CD4-positive, alpha-beta memory T cell (primary cell): ENCODE measurements at regions of chr5 and their contacts with region 1.

Region 1: DNA sequence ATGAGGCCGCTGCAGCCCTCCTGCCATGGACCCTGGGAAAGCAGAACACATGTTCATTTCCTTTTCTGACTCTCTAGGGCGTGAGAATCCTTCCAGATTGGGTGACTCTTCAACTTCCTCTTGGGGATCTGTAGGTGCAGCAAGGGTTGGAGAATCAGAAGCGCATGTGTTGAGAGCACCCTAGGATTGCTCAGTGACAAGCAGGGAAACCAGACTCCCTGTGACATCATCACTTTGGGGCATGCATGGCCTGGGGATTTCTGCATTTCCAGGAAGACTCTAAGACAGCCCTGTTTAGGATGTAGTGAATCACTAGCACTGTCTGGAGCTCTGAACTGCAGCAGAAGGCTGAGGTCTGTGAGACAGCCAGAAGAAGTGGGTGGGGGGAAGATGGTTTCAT is 15.1 kb upstream of the LCP2 start:
- DNase-seq: peak in 2 of 5 donors; percentile 39 to 93
- H3K4me3 ChIP-seq: peak overlapping the region; percentile 3 to 42
- H3K4me3 Mint-ChIP-seq: peak overlapping the region; percentile 63 to 91 (median 76)
- H3K27ac ChIP-seq: peak overlapping the region; percentile 59
- H3K27ac Mint-ChIP-seq: peak overlapping the region; percentile 84 to 97 (median 96)
- H3K4me1 ChIP-seq: peaks cover 48% of the 10 kb centered on the region
- H3K4me1 Mint-ChIP-seq: peaks cover 41 to 69% (median 49%) of the 10 kb centered on the region in 4 donors
- H3K27me3 ChIP-seq: no peaks in the 10 kb centered on the region
- H3K27me3 Mint-ChIP-seq: no peaks in the 10 kb centered on the region

Region 2: DNA sequence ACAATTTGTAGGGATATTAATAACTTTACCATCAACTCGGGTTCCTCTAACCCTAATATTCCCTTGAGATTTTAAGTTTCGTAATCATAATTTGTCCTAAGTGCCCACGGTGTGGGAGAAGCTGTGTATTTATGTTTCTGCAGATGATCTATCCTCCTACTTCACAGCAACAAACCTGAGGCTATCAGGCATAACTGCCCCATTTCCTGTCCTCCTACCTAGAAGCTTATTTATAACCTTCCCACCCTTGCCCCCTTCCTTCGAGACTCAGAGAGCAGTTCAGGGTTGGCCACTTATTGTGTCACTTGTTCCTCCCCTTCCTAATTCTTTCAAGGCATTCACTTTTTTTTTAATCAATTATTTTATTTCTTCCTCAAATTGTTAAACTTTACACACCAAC is 14.5 kb after region 1 on chr5:
- CTCF ChIA-PET with region 1: interaction called, 18 read pairs
- POLR2A ChIA-PET with region 1: interaction called, 664 read pairs
- intact Hi-C with region 1: loop called (anchors 1 kb)
- DNase-seq: no peak
- H3K4me3 ChIP-seq: no peak overlapping the region
- H3K4me3 Mint-ChIP-seq: no peak overlapping the region
- H3K27ac ChIP-seq: no peak overlapping the region
- H3K27ac Mint-ChIP-seq: no peak overlapping the region
- H3K4me1 ChIP-seq: peaks cover 55% of the 10 kb centered on the region
- H3K4me1 Mint-ChIP-seq: peaks cover 5 to 9% (median 8%) of the 10 kb centered on the region in 4 donors
- H3K27me3 ChIP-seq: no peaks in the 10 kb centered on the region
- H3K27me3 Mint-ChIP-seq: peaks cover 0 to 2% of the 10 kb centered on the region in 2 donors